ENCODE measurements at regions of chr14 and their contacts with region 1.

Region 1: DNA sequence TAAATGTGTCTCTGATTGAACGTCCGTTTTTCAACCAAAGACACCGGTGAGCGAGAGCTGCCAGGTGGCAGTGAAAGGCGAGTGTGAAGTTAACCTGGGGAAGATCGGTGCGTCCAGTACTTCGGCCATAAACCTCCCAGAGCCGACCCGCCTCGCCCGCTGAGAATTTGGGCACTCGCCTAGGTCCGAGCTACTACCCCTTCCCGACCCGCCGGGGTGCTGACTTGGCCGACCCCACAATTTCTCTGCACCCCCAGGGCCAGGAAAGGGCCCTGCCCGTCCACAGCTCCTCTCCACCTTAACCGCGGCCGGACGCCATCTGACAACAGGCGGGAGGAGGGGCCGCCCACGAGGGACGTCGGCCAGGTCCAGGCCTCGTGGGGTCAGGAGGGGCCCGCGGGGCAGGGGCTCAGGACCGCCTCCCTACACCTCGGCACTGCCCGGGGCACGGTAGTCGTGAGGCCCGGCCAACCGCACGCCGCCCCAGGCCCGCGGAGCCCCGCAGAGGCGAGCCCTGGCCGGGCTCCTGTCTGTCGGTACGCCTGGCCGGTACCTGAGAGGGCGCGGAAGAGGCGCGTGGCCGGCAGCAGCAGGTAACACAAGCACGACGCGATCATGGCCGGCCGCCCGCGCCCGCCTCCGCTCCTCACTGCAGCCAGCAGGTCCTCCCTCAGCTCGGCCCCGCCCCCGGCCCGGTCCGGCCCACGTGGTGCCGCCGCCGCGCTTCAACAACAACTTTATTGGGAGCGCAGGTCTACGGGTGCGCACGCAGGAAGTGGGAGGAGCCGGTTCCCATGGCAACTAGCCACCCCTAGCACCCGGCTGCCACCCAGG is at the start of gene ANGEL1:
- DNase-seq: peak; percentile 93 to 98 (median 96)
- ATAC-seq: peak; percentile 98
- H3K4me3 ChIP-seq: peak within 1 kb of the TSS; percentile 63
- H3K4me3 Mint-ChIP-seq: peak within 1 kb of the TSS; percentile 88 to 99 (median 93)
- H3K27ac ChIP-seq: peak within 1 kb of the TSS; percentile 87
- H3K27ac Mint-ChIP-seq: peak within 1 kb of the TSS; percentile 85 to 96 (median 94)
- H3K4me1 ChIP-seq: peaks cover 20 to 21% of the 10 kb centered on the region in 2 donors
- H3K4me1 Mint-ChIP-seq: peaks cover 16 to 48% (median 37%) of the 10 kb centered on the region in 7 donors
- H3K27me3 ChIP-seq: no peaks in the 10 kb centered on the region
- H3K27me3 Mint-ChIP-seq: no peaks in the 10 kb centered on the region
- total RNA-seq, gene ANGEL1: 14.5 to 37.6 (median 19.9) TPM

Region 2: GRCh38 chr14:76531821-76532318 is 280.6 kb before region 1 on chr14:
- CTCF ChIA-PET with region 1: no interaction called
- POLR2A ChIA-PET with region 1: no interaction called
- intact Hi-C with region 1: no loop called
- DNase-seq: no peak
- ATAC-seq: no peak
- H3K4me3 ChIP-seq: no peak overlapping the region
- H3K4me3 Mint-ChIP-seq: no peak overlapping the region
- H3K27ac ChIP-seq: no peak overlapping the region
- H3K27ac Mint-ChIP-seq: no peak overlapping the region
- H3K4me1 ChIP-seq: no peaks in the 10 kb centered on the region
- H3K4me1 Mint-ChIP-seq: no peaks in the 10 kb centered on the region
- H3K27me3 ChIP-seq: no peaks in the 10 kb centered on the region
- H3K27me3 Mint-ChIP-seq: peaks cover 0 to 33% (median 5%) of the 10 kb centered on the region in 5 donors

Region 3: GRCh38 chr14:76710056-76711010 is 102.1 kb before region 1 on chr14:
- CTCF ChIA-PET with region 1: interaction called, 9 read pairs
- POLR2A ChIA-PET with region 1: no interaction called
- intact Hi-C with region 1: loop called (anchors 1 kb)
- DNase-seq: peak in 5 of 9 donors; percentile 11 to 44 (median 33)
- ATAC-seq: peak; percentile 67
- H3K4me3 ChIP-seq: no peak overlapping the region
- H3K4me3 Mint-ChIP-seq: no peak overlapping the region
- H3K27ac ChIP-seq: no peak overlapping the region
- H3K27ac Mint-ChIP-seq: no peak overlapping the region
- H3K4me1 ChIP-seq: no peaks in the 10 kb centered on the region
- H3K4me1 Mint-ChIP-seq: no peaks in the 10 kb centered on the region
- H3K27me3 ChIP-seq: no peaks in the 10 kb centered on the region
- H3K27me3 Mint-ChIP-seq: peaks cover 3 to 11% (median 9%) of the 10 kb centered on the region in 5 donors

Region 4: DNA sequence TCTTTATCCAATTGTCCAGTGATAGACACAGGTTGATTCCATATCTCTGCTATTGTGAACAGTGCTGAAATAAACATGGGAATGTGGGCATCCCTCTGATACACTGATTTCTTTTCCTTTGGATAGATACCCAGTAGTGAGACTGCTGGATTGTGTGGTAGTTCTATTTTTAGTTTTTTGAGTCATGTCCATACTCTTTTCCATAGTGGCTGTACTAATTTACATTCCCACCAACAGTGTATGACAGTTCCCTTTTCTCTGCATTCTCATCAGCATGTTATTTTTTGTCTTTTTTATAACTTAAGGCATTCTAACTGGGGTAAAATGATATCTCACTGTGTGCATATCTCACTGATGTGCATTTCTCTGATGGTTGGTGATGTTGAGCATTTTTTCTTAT is 75.9 kb before region 1 on chr14:
- CTCF ChIA-PET with region 1: no interaction called
- POLR2A ChIA-PET with region 1: no interaction called
- intact Hi-C with region 1: no loop called
- DNase-seq: no peak
- ATAC-seq: no peak
- H3K4me3 ChIP-seq: no peak overlapping the region
- H3K4me3 Mint-ChIP-seq: no peak overlapping the region
- H3K27ac ChIP-seq: no peak overlapping the region
- H3K27ac Mint-ChIP-seq: no peak overlapping the region
- H3K4me1 ChIP-seq: no peaks in the 10 kb centered on the region
- H3K4me1 Mint-ChIP-seq: no peaks in the 10 kb centered on the region
- H3K27me3 ChIP-seq: peaks cover 0 to 3% of the 10 kb centered on the region in 2 donors
- H3K27me3 Mint-ChIP-seq: peaks cover 0 to 47% (median 11%) of the 10 kb centered on the region in 5 donors

Region 5: DNA sequence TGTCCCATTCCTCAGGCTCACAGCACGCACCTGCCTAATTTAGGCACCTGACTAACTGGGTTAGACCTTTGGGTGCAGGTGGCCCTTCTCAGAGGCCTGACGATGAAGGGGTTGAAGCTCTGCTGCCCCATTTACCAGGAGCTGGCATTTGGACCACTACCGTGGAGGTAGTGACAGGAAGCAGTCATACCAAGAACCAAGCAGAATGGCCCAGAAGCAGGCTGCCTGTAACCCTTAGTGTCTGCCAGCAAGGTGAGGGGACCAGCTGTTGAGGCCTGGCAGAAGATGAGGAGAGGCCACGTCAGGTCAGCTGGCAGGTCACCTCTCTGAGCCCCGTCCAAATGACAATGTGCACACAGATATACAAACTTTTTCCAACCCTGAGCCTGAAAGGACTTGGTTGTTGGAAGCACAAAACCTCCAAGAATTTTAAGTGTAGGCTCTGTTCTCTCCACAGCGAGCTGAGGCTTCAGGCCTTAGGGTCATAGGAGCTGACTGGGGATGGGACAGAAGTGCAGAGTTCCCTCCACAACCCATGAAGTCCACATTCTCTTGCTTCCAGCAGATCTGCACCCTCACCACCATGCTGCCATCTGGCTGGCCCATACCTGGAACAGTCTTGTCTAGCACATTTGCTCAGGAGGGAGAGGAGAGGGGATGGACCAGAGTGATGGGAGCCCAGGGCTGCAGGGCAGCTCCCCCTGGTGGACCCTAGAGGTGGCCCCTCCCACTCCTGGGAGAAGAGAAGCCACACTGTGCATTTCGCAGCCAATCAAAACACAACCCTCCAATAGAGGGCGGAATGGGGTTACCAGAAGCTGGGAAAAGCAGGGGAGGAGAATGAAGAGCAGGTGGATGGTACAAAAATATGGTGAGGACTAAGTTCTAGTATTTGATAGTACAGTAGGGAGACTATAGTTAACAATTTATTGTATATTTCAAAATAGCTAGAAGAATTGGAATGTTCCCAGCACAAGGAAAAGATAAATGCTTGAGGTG is 27.9 kb before region 1 on chr14:
- CTCF ChIA-PET with region 1: no interaction called
- POLR2A ChIA-PET with region 1: no interaction called
- intact Hi-C with region 1: loop called (anchors 2 kb)
- DNase-seq: peak; percentile 19 to 64 (median 40)
- ATAC-seq: peak; percentile 98
- H3K4me3 ChIP-seq: no peak overlapping the region
- H3K4me3 Mint-ChIP-seq: no peak overlapping the region
- H3K27ac ChIP-seq: no peak overlapping the region
- H3K27ac Mint-ChIP-seq: peak overlapping the region in 8 of 9 donors; percentile 5 to 83 (median 40)
- H3K4me1 ChIP-seq: peaks cover 0 to 6% of the 10 kb centered on the region in 2 donors
- H3K4me1 Mint-ChIP-seq: peaks cover 8 to 43% (median 15%) of the 10 kb centered on the region in 7 donors
- H3K27me3 ChIP-seq: no peaks in the 10 kb centered on the region
- H3K27me3 Mint-ChIP-seq: no peaks in the 10 kb centered on the region

Region 6: DNA sequence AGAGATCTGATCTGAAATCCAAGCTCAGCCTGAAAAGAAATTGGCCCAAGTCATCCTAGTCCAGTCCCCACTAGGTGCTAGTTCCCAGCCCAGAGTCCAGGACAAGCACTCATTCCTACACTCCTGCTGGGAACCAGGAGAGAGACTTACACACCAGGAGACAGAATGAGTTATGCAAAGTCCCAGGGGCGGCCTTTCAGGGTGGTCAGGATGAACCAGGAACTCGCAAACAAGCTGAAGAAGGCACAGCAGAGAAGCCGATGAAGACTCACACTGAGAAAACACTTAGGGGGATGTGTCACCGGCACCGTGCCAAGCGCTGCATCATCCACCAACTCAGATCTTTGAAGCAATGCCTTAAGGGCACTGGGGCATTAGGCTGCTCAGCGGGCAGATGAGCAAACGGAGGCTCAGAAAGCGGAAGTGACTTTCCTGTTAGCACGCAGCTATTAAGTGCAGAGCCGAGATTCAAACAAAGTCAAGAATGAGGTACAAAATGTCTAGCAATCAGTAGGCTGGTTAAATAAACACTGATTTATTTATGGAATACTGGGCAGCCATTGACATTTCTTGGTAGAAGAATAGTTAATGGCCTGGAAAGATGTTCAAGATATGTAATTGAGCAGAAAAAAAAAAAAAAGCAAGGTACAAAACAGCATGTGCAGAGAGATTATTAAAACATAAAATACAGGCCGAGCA is 92.5 kb after region 1 on chr14:
- CTCF ChIA-PET with region 1: no interaction called
- POLR2A ChIA-PET with region 1: no interaction called
- intact Hi-C with region 1: loop called in 1 of 2 experiments (anchors 5 kb)
- DNase-seq: peak in 8 of 9 donors; percentile 51 to 73 (median 62)
- ATAC-seq: peak; percentile 80
- H3K4me3 ChIP-seq: peak overlapping the region; percentile 1
- H3K4me3 Mint-ChIP-seq: peak overlapping the region in 9 of 10 donors; percentile 59 to 81 (median 71)
- H3K27ac ChIP-seq: no peak overlapping the region
- H3K27ac Mint-ChIP-seq: peak overlapping the region; percentile 43 to 97 (median 83)
- H3K4me1 ChIP-seq: peaks cover 18 to 24% of the 10 kb centered on the region in 2 donors
- H3K4me1 Mint-ChIP-seq: peaks cover 23 to 41% (median 27%) of the 10 kb centered on the region in 7 donors
- H3K27me3 ChIP-seq: no peaks in the 10 kb centered on the region
- H3K27me3 Mint-ChIP-seq: peaks cover 0 to 8% (median 0%) of the 10 kb centered on the region in 5 donors

Region 7: DNA sequence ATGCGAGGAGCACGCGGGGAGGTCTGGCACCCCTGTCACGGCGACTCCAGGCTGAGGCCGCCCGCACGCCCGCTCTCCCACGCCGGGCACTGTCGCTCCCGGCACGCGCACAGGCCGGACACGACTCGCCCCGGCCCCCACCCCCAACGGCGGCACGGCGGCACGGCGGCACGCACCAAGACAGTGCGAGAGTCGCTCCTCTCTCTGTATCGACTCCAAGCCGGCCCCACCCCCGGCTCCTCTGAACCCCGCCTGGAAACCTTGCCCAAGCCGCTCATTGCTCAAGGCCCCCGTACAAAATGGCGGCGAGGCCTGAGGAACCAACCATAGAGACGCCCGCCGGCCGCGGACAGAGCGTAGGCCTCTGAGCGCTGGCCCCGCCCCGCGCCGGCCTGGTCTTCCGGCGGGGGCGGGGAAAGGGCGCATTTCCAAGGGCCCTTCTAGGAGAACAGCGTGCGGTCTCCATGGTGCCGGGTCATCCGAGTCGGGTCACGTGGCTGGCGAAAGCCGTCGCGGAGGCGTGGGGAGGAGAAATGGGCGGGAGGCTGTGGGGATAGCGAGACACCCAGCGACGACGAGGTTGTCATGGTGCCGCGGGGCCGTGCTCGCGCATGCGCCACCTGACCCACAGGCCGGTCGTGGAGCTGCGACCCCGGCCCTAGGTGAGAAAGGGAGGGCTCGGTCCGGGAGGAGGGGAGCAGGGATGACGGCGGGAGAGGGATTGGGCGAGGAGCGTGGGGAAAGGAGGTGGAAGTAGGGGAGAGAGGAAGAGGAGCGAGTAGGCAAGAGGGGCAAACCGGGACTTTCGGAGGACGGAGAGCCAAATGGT is 285.5 kb after region 1 on chr14 and contains the start of gene CIPC:
- CTCF ChIA-PET with region 1: no interaction called
- POLR2A ChIA-PET with region 1: interaction called, 4 read pairs
- intact Hi-C with region 1: loop called (anchors 1 kb)
- DNase-seq: peak; percentile 92 to 99 (median 98)
- ATAC-seq: peak; percentile 96
- H3K4me3 ChIP-seq: peak within 1 kb of the TSS; percentile 85
- H3K4me3 Mint-ChIP-seq: peak within 1 kb of the TSS; percentile 84 to 98 (median 90)
- H3K27ac ChIP-seq: peak within 1 kb of the TSS; percentile 97
- H3K27ac Mint-ChIP-seq: peak within 1 kb of the TSS; percentile 83 to 99 (median 97)
- H3K4me1 ChIP-seq: peaks cover 9 to 11% of the 10 kb centered on the region in 2 donors
- H3K4me1 Mint-ChIP-seq: peaks cover 24 to 55% (median 41%) of the 10 kb centered on the region in 7 donors
- H3K27me3 ChIP-seq: no peaks in the 10 kb centered on the region
- H3K27me3 Mint-ChIP-seq: peaks cover 0 to 3% (median 0%) of the 10 kb centered on the region in 5 donors
- total RNA-seq, gene CIPC: 5.5 to 14.2 (median 12.9) TPM

Region 8: GRCh38 chr14:77616454-77617229 is 804.2 kb after region 1 on chr14 and contains the start of gene SPTLC2:
- CTCF ChIA-PET with region 1: no interaction called
- POLR2A ChIA-PET with region 1: no interaction called
- intact Hi-C with region 1: loop called in 1 of 2 experiments (anchors 2 kb)
- DNase-seq: peak; percentile 78 to 99 (median 96)
- ATAC-seq: peak; percentile 98
- H3K4me3 ChIP-seq: peak within 1 kb of the TSS; percentile 55
- H3K4me3 Mint-ChIP-seq: peak within 1 kb of the TSS; percentile 85 to 97 (median 92)
- H3K27ac ChIP-seq: peak within 1 kb of the TSS; percentile 69
- H3K27ac Mint-ChIP-seq: peak within 1 kb of the TSS; percentile 45 to 91 (median 86)
- H3K4me1 ChIP-seq: peaks cover 4 to 5% of the 10 kb centered on the region in 2 donors
- H3K4me1 Mint-ChIP-seq: peaks cover 29 to 52% (median 40%) of the 10 kb centered on the region in 7 donors
- H3K27me3 ChIP-seq: no peaks in the 10 kb centered on the region
- H3K27me3 Mint-ChIP-seq: peaks cover 0 to 4% (median 0%) of the 10 kb centered on the region in 5 donors
- total RNA-seq, gene SPTLC2: 19.0 to 58.1 (median 25.7) TPM

Region 9: DNA sequence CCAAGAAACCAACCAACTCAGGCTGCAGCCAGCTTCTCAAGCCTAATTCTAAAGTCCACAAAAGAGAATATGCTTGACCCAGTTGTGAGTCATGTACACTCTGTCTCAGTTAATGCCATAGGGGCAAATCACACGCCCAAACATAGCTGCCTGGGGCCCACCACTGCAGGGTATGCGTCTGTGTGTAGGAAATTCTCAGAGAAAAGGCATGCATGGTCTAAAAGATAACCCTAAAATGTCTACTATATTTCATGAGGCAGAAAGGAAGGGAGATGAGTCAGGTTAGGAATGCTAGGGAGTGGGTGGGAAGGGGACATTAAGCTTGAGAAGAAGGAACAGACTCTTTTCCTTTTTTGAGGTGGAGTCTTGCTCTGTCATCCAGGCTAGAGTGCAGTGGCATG is 826.3 kb after region 1 on chr14:
- CTCF ChIA-PET with region 1: no interaction called
- POLR2A ChIA-PET with region 1: no interaction called
- intact Hi-C with region 1: no loop called
- DNase-seq: no peak
- ATAC-seq: no peak
- H3K4me3 ChIP-seq: no peak overlapping the region
- H3K4me3 Mint-ChIP-seq: no peak overlapping the region
- H3K27ac ChIP-seq: no peak overlapping the region
- H3K27ac Mint-ChIP-seq: no peak overlapping the region
- H3K4me1 ChIP-seq: peaks cover 8% of the 10 kb centered on the region in 2 donors
- H3K4me1 Mint-ChIP-seq: peaks cover 0 to 19% (median 16%) of the 10 kb centered on the region in 7 donors
- H3K27me3 ChIP-seq: no peaks in the 10 kb centered on the region
- H3K27me3 Mint-ChIP-seq: peaks cover 0 to 3% (median 0%) of the 10 kb centered on the region in 5 donors

Region 10: GRCh38 chr14:77799863-77800730 is 987.7 kb after region 1 on chr14 and contains the start of gene ADCK1:
- CTCF ChIA-PET with region 1: no interaction called
- POLR2A ChIA-PET with region 1: no interaction called
- intact Hi-C with region 1: loop called in 1 of 2 experiments (anchors 10 kb)
- DNase-seq: peak; percentile 74 to 87 (median 84)
- ATAC-seq: peak; percentile 94
- H3K4me3 ChIP-seq: peak within 1 kb of the TSS; percentile 71
- H3K4me3 Mint-ChIP-seq: peak within 1 kb of the TSS; percentile 83 to 89 (median 87)
- H3K27ac ChIP-seq: peak within 1 kb of the TSS; percentile 81
- H3K27ac Mint-ChIP-seq: peak within 1 kb of the TSS; percentile 34 to 92 (median 78)
- H3K4me1 ChIP-seq: no peaks in the 10 kb centered on the region
- H3K4me1 Mint-ChIP-seq: peaks cover 0 to 17% (median 6%) of the 10 kb centered on the region in 7 donors
- H3K27me3 ChIP-seq: no peaks in the 10 kb centered on the region
- H3K27me3 Mint-ChIP-seq: no peaks in the 10 kb centered on the region
- total RNA-seq, gene ADCK1: 4.5 to 10.6 (median 10.3) TPM

Measured in naive thymus-derived CD4-positive, alpha-beta T cell (primary cell).